Panc1 (cell line): ENCODE measurements at regions of chr10 and their contacts with region 1.

Region 1: GRCh38 chr10:36880898-36881297 is 244.5 kb upstream of the ANKRD30A start:
- DNase-seq: no peak
- ATAC-seq: no peak
- H3K4me3 ChIP-seq: no peak overlapping the region
- H3K27ac ChIP-seq: no peak overlapping the region
- H3K4me1 ChIP-seq: no peaks in the 10 kb centered on the region
- H3K27me3 ChIP-seq: peaks cover 3% of the 10 kb centered on the region; the same call in 1 of the 2 replicates
- CTCF ChIP-seq: peak; percentile 48; the same call in 1 of the 2 replicates

Region 2: DNA sequence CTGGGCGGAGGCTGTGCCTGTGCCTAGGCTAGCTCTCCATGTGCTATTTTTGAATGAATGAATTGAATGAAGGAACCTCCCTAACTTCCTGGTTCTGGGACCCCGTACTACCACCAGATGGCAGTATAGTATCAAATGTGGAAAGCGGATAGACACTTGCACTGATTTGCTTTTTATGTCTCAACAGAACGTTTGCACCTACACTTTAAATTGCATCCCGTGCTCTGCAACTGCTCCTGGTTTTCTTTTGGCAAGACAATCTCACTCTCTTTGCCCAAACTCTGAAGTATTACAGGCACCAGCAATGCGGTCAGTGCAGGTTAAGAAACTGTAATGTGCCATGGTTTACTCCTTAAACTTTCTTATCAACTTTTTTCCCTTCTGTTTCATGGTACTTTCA is 1245.3 kb before region 1 on chr10:
- CTCF ChIA-PET with region 1: no interaction called
- POLR2A ChIA-PET with region 1: interaction called, 3 read pairs
- in situ Hi-C with region 1: no loop called
- intact Hi-C with region 1: loop called (anchors 5 kb)
- DNase-seq: peak; percentile 45
- ATAC-seq: peak; percentile 83
- H3K4me3 ChIP-seq: no peak overlapping the region
- H3K27ac ChIP-seq: no peak overlapping the region
- H3K4me1 ChIP-seq: no peaks in the 10 kb centered on the region
- H3K27me3 ChIP-seq: no peaks in the 10 kb centered on the region; the same call in 1 of the 2 replicates
- CTCF ChIP-seq: peak; percentile 81

Region 3: DNA sequence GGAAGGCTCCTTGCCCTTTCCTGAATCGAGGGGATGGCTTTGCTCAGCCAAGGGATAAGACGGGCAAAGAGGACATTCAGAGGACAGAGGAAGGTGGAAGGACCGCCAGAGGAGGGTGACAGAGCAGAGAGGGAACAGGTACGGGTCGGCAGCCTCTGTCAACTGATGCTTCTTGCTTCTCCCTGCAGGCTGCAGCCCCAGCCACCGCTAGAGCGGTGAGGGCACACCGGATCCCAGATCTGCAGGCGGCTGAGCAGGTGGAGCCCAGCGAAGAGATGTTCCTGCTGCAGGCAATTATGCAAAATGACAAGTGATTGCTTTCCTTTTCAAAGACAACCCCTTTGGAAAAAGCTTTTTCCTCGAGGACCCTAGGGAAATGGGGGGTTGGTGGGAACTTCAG is 62.6 kb after region 1 on chr10:
- CTCF ChIA-PET with region 1: no interaction called
- POLR2A ChIA-PET with region 1: no interaction called
- in situ Hi-C with region 1: no loop called
- intact Hi-C with region 1: no loop called
- DNase-seq: no peak
- ATAC-seq: no peak
- H3K4me3 ChIP-seq: no peak overlapping the region
- H3K27ac ChIP-seq: no peak overlapping the region
- H3K4me1 ChIP-seq: no peaks in the 10 kb centered on the region
- H3K27me3 ChIP-seq: no peaks in the 10 kb centered on the region
- CTCF ChIP-seq: no peak